CD8-positive, alpha-beta T cell (primary cell): ENCODE measurements at regions of chr5 and their contacts with region 1.

Region 1: GRCh38 chr5:74640450-74640953 is at the start of gene ENC1:
- DNase-seq: peak; percentile 51 to 88 (median 71)
- ATAC-seq: peak; percentile 84
- H3K4me3 ChIP-seq: peak within 1 kb of the TSS; percentile 58 to 87
- H3K4me3 Mint-ChIP-seq: peak within 1 kb of the TSS; percentile 91
- H3K27ac ChIP-seq: peak within 1 kb of the TSS; percentile 31 to 66
- H3K27ac Mint-ChIP-seq: peak within 1 kb of the TSS; percentile 62
- H3K4me1 ChIP-seq: peaks cover 16% of the 10 kb centered on the region
- H3K4me1 Mint-ChIP-seq: peaks cover 28% of the 10 kb centered on the region
- H3K27me3 ChIP-seq: peaks cover 0 to 2% of the 10 kb centered on the region in 2 experiments
- H3K27me3 Mint-ChIP-seq: peaks cover 22% of the 10 kb centered on the region
- CTCF ChIP-seq: no peak
- total RNA-seq, gene ENC1: 44.2 to 51.1 TPM

Region 2: DNA sequence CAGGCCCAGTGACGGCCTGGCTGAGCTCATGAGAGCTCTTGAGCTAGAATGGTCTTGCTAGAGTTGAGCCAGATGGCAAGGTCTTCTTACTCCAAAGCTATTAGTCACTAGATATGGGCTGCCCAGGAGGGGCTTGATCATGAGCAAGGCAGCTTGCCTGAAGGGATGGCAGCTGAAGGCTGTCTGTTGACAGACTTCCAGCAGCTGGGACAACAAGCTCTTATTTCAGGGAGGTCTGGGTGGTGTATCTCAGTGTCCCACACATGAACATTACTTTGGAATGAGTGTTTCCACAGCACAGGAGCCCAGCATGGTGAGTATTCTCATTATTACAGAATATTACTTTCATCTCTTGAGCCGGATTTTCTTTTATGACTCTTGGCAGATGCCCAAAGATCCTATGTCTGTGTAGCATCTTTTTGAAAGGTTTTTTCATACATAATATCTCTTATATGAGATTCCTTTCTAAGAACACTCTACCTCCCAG is 600.4 kb before region 1 on chr5:
- CTCF ChIA-PET with region 1: no interaction called
- POLR2A ChIA-PET with region 1: no interaction called
- intact Hi-C with region 1: loop called in 1 of 2 experiments (anchors 10 kb)
- DNase-seq: no peak
- ATAC-seq: no peak
- H3K4me3 ChIP-seq: no peak overlapping the region
- H3K4me3 Mint-ChIP-seq: no peak overlapping the region
- H3K27ac ChIP-seq: no peak overlapping the region
- H3K27ac Mint-ChIP-seq: no peak overlapping the region
- H3K4me1 ChIP-seq: no peaks in the 10 kb centered on the region
- H3K4me1 Mint-ChIP-seq: no peaks in the 10 kb centered on the region
- H3K27me3 ChIP-seq: no peaks in the 10 kb centered on the region
- H3K27me3 Mint-ChIP-seq: no peaks in the 10 kb centered on the region
- CTCF ChIP-seq: no peak

Region 3: GRCh38 chr5:74394916-74395781 is 245.4 kb before region 1 on chr5:
- CTCF ChIA-PET with region 1: no interaction called
- POLR2A ChIA-PET with region 1: no interaction called
- intact Hi-C with region 1: loop called (anchors 5 kb)
- DNase-seq: peak in 2 of 9 experiments; percentile 6 to 10
- ATAC-seq: no peak
- H3K4me3 ChIP-seq: no peak overlapping the region
- H3K4me3 Mint-ChIP-seq: no peak overlapping the region
- H3K27ac ChIP-seq: no peak overlapping the region
- H3K27ac Mint-ChIP-seq: no peak overlapping the region
- H3K4me1 ChIP-seq: no peaks in the 10 kb centered on the region
- H3K4me1 Mint-ChIP-seq: no peaks in the 10 kb centered on the region
- H3K27me3 ChIP-seq: no peaks in the 10 kb centered on the region
- H3K27me3 Mint-ChIP-seq: no peaks in the 10 kb centered on the region
- CTCF ChIP-seq: no peak